Endothelial cell of umbilical vein (primary cell): ENCODE measurements at regions of chr9 and their contacts with region 1.

Region 1: GRCh38 chr9:69346998-69347397 is 22.0 kb downstream of the ENTREP1 start:
- DNase-seq: peak; percentile 10
- H3K4me3 ChIP-seq: no peak overlapping the region
- H3K27ac ChIP-seq: peak overlapping the region; percentile 23
- H3K4me1 ChIP-seq: peaks cover 15% of the 10 kb centered on the region
- H3K27me3 ChIP-seq: no peaks in the 10 kb centered on the region
- CTCF ChIP-seq: no peak
- POLR2A ChIP-seq: no peak

Region 2: DNA sequence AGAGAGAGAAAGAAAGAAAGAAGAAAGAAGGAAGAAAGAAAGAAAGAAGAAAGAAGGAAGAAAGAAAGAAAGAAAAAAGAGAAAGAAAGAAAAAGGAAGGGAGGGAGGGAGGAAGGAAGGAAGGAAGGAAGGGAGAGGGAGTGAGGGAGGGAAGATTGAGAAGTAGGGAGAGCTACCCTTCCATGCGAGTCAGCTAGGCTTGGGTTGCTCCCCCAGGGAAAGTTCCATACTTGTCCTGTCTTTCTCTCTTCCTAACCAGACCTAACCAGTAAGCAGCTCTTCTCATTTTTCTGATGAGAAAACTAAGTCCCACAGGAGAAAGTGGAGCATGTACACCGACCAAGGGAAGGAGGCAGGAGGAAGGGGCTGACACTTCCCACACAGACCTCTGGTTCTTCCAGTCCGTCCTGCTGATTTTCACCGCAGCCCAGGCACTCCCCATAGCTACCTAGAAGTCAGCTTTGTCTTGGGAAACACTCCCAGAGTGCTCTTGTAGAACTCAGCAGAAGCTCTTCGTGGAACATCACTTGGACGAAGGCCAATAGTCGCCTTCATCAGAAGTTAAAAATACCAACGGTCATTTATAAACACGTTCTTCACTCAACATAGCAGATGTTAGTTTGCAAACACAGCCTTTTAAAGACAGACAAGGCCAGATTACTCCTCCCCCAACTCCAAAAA is 51.0 kb before region 1 on chr9:
- CTCF ChIA-PET with region 1: no interaction called
- POLR2A ChIA-PET with region 1: no interaction called
- dilution Hi-C with region 1: no loop called
- intact Hi-C with region 1: loop called (anchors 5 kb)
- DNase-seq: no peak
- H3K4me3 ChIP-seq: no peak overlapping the region
- H3K27ac ChIP-seq: no peak overlapping the region
- H3K4me1 ChIP-seq: no peaks in the 10 kb centered on the region
- H3K27me3 ChIP-seq: peaks cover 5 to 6% of the 10 kb centered on the region in 2 experiments
- CTCF ChIP-seq: no peak
- POLR2A ChIP-seq: no peak